ENCODE measurements at regions of chr12 and their contacts with region 1.

Region 1: GRCh38 chr12:8662593-8662992 is at the start of gene MFAP5:
- DNase-seq: no peak
- ATAC-seq: peak in 2 of 4 donors; percentile 34 to 40
- H3K4me3 ChIP-seq: no peak within 1 kb of the TSS
- H3K27ac ChIP-seq: no peak within 1 kb of the TSS
- H3K4me1 ChIP-seq: no peaks in the 10 kb centered on the region
- H3K27me3 ChIP-seq: no peaks in the 10 kb centered on the region
- CTCF ChIP-seq: no peak
- total RNA-seq, gene MFAP5: 0.19 to 14.7 (median 6.4) TPM

Region 2: DNA sequence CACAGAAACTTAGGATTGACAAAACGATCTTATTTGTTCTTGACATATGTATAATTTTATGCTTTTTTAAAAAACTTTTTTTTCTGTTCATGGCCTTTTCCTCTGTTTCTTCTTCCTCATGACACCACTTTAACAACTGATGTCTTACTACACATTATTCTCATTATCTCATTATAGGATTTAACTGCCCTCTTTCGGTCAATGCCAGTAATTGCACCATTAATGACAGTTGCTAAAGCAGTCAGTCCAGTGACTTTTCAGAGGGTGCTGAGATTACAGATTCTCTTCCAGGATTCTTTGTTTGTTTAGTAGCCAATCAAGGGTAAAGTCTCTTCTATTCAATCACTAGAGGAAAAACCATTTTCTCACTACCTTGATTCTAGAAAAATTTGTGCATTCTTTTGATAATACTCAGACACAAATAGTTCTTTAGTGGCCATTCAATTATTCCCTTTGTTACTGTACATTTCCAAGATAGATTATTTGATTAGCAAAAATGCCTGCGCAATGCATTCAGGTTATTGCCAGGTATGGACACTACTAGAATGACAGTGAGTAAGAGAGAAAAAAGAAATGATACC is 376.9 kb after region 1 on chr12:
- intact Hi-C with region 1: loop called in 1 of 3 experiments (anchors 10 kb)
- DNase-seq: peak in 1 of 6 donors; percentile 13
- ATAC-seq: peak; percentile 55 to 87 (median 83)
- H3K4me3 ChIP-seq: no peak overlapping the region
- H3K27ac ChIP-seq: no peak overlapping the region
- H3K4me1 ChIP-seq: peaks cover 0 to 7% (median 0%) of the 10 kb centered on the region in 3 donors
- H3K27me3 ChIP-seq: no peaks in the 10 kb centered on the region
- CTCF ChIP-seq: peak; percentile 45 to 75 (median 63)

Region 3: DNA sequence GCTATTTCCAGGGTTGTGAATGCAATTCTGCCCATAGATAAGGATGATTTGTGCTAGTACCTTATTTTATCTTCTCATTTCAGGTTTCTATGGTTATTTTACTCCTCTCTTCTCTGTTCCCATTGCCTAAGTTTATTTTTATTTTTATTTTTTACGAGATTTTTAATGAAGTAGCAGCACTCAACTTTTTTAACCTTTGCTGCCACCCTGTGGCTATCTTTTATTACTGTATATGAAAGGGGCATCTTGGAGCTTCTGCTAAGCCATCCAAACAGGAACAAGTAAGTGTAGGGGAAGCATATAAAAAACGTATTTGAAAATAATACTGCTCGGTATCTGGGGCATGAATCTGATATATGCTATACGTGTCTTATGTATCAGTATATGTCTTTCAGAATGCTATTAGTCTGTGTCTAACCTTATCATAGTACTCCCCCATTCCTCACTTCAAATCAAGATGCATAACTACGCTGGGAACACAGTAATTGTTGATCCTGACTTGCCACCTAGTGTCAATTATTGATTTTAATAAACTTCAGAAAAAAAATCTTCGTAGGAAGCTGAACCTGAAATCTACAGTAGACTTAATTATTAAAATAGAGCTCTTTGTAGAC is 387.0 kb after region 1 on chr12:
- intact Hi-C with region 1: loop called in 1 of 3 experiments (anchors 10 kb)
- DNase-seq: no peak
- ATAC-seq: peak in 3 of 4 donors; percentile 75 to 81 (median 76)
- H3K4me3 ChIP-seq: no peak overlapping the region
- H3K27ac ChIP-seq: no peak overlapping the region
- H3K4me1 ChIP-seq: no peaks in the 10 kb centered on the region
- H3K27me3 ChIP-seq: no peaks in the 10 kb centered on the region
- CTCF ChIP-seq: peak in 3 of 4 donors; percentile 28 to 40 (median 29)

Measured in pancreas (tissue), 10 donors.